ENCODE measurements at regions of chr12 and their contacts with region 1.

Region 1: DNA sequence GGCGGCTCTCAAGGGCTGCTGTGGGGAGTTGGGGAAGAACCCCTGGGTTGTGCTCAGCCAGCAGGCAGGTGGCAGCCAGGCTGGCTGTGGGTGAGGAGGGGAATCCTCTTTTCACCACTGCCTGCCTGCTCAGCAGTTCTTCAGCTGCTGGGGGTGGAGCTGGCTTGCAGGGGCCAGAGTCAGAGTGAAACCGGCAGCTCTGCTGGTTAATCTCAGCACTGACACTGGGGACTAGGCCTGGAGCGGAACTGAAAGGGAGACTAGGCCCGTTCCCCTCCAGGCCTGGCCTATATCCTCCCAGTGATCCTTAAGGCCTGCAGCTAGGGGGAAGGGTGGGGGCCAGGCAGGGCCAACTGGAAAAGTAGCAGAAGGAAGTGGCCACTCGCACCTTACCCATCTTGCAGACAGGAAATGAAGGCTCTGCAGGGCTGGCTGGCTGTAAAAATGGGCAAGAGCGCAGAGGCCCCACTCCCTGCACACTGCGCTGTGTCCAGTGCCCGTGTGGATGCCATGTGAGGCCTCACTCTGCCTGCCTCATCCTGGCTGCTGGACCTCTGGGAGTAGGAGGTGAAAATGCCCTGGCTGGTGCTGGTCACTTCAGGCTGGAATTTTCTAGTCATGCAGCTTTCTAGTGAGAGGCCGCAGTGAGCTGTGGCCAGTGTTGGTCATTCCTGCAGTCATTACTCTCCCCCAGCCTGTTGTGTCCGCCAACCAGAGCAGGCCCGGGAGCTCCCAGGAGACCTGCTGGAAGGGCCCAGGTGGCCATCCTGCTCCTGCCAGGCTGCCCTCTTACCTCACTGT is 39.4 kb downstream of the SH2B3 start:
- DNase-seq: no peak
- H3K4me3 ChIP-seq: no peak overlapping the region
- H3K27ac ChIP-seq: peak overlapping the region; percentile 81
- H3K4me1 ChIP-seq: peaks cover 59% of the 10 kb centered on the region
- H3K27me3 ChIP-seq: no peaks in the 10 kb centered on the region
- CTCF ChIP-seq: no peak
- POLR2A ChIP-seq: peak; percentile 28

Region 2: GRCh38 chr12:111428728-111429175 is 16.4 kb before region 1 on chr12:
- CTCF ChIA-PET with region 1: interaction called, 48 read pairs
- POLR2A ChIA-PET with region 1: interaction called, 3 read pairs
- dilution Hi-C with region 1: no loop called
- intact Hi-C with region 1: loop called (anchors 1 kb)
- DNase-seq: peak; percentile 73
- H3K4me3 ChIP-seq: no peak overlapping the region
- H3K27ac ChIP-seq: peak overlapping the region; percentile 72
- H3K4me1 ChIP-seq: peaks cover 86% of the 10 kb centered on the region
- H3K27me3 ChIP-seq: no peaks in the 10 kb centered on the region
- CTCF ChIP-seq: no peak
- POLR2A ChIP-seq: no peak

Region 3: GRCh38 chr12:111434680-111435338 is 10.3 kb before region 1 on chr12:
- CTCF ChIA-PET with region 1: interaction called, 48 read pairs
- POLR2A ChIA-PET with region 1: interaction called, 5 read pairs
- dilution Hi-C with region 1: no loop called
- intact Hi-C with region 1: loop called (anchors 1 kb)
- DNase-seq: peak; percentile 83
- H3K4me3 ChIP-seq: peak overlapping the region in 1 of 3 experiments; percentile 27
- H3K27ac ChIP-seq: peak overlapping the region; percentile 85
- H3K4me1 ChIP-seq: peaks cover 90% of the 10 kb centered on the region
- H3K27me3 ChIP-seq: no peaks in the 10 kb centered on the region
- CTCF ChIP-seq: no peak
- POLR2A ChIP-seq: no peak

Region 4: GRCh38 chr12:111546758-111547383 is 101.7 kb after region 1 on chr12:
- CTCF ChIA-PET with region 1: no interaction called
- POLR2A ChIA-PET with region 1: no interaction called
- dilution Hi-C with region 1: no loop called
- intact Hi-C with region 1: no loop called
- DNase-seq: no peak
- H3K4me3 ChIP-seq: no peak overlapping the region
- H3K27ac ChIP-seq: no peak overlapping the region
- H3K4me1 ChIP-seq: no peaks in the 10 kb centered on the region
- H3K27me3 ChIP-seq: no peaks in the 10 kb centered on the region
- CTCF ChIP-seq: no peak
- POLR2A ChIP-seq: no peak